ENCODE measurements at regions of chr1 and their contacts with region 1.

Region 1: GRCh38 chr1:212595787-212596714 is 12.5 kb upstream of the ATF3 start:
- DNase-seq: peak; percentile 92
- ATAC-seq: peak; percentile 94
- H3K4me3 ChIP-seq: no peak overlapping the region
- H3K27ac ChIP-seq: peak overlapping the region; percentile 68
- H3K4me1 ChIP-seq: peaks cover 13% of the 10 kb centered on the region
- H3K27me3 ChIP-seq: 0 out of 2 replicates have a peak, but pooled peaks cover 2% of the 10 kb centered on the region
- CTCF ChIP-seq: peak; percentile 80

Region 2: DNA sequence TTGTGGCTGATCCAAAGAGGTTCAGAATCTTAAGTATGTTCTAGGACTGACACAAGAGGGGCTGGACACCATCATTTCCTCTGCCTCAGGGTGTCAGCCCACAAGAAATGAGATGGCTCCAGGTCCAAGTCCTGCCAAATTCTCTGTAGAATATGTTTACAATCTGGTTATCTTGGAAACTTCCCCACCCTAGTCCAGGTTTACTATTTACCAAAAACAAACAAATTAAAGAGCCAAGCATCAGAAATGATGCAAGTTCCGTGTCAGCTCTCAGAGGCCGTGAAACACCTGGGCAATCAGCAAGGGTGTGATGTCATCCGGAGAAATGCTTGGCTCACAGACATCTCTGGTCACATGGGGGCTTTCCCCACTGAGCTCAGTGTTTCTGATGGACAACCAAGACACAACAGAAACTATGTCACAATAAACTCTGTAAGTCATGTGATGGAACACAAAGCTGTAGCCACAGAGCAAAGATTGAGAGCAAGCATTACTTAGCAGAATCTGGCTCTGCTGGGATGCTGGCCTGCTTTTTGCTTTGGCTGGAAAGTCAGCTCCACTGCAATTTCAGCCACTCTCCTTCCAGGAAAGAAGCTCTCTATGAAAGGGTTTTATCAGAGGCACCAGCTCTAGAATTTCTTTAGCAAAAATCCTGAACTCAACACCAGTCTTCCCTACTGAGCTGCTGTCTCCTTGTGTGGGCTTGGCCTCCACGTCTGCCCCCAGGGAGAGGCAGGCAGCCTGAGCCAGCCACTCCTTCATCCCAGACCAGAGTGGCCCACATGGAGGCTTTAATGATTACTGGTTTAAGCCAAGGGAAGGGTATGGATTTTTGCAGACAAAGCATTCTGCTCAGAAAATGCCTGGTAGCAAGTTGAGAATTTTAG is 107.4 kb before region 1 on chr1:
- CTCF ChIA-PET with region 1: no interaction called
- POLR2A ChIA-PET with region 1: no interaction called
- in situ Hi-C with region 1: no loop called
- intact Hi-C with region 1: loop called (anchors 5 kb)
- DNase-seq: peak; percentile 80
- ATAC-seq: no peak
- H3K4me3 ChIP-seq: no peak overlapping the region
- H3K27ac ChIP-seq: peak overlapping the region; percentile 59; the same call in 1 of the 2 replicates
- H3K4me1 ChIP-seq: peaks cover 28% of the 10 kb centered on the region
- H3K27me3 ChIP-seq: no peaks in the 10 kb centered on the region
- CTCF ChIP-seq: no peak